ENCODE measurements at regions of chr6 and their contacts with region 1.

Region 1: DNA sequence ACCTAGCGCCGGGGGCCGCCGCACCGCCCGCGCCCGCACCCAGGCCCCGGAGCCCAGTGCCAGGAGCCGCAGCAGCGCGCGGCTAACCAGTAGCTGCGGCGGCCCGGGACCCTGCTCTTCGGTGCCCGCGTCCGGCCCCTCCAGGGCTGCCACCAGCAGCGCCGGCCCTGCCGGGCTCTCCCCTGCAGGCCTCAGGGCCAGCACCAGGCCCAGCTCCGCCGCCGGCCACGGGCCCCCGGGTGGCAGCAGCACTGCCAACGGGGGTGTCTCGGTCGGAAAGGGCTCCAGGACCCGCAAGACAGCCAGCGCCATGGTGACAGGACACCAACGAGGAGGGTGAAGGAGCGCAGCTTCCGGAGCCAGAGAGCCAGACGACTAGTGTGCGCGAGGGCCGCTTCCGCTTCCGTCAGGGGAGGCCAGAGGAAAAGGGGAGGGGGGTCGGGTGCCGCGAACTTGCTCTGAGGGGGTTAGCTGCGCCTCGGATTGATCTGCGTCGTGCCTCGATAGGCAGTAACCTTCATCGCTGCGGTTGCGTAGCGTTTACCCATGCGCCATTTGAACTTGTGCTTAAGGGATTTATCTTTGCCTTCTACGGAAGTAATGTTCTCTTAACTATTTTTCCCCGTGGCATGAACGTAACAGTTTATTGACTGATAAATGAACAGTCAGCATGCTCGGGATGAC is at the start of gene PEX6:
- DNase-seq: peak; percentile 98
- ATAC-seq: peak; percentile 95
- H3K4me3 Mint-ChIP-seq: peak within 1 kb of the TSS; percentile 89
- H3K27ac Mint-ChIP-seq: peak within 1 kb of the TSS; percentile 95
- H3K4me1 Mint-ChIP-seq: peaks cover 45% of the 10 kb centered on the region
- H3K27me3 Mint-ChIP-seq: no peaks in the 10 kb centered on the region
- total RNA-seq, gene PEX6: 10.7 to 14.6 TPM

Region 2: GRCh38 chr6:42777126-42777822 is 201.7 kb before region 1 on chr6:
- CTCF ChIA-PET with region 1: no interaction called
- POLR2A ChIA-PET with region 1: no interaction called
- intact Hi-C with region 1: loop called (anchors 1 to 10 kb)
- DNase-seq: no peak
- ATAC-seq: no peak
- H3K4me3 Mint-ChIP-seq: no peak overlapping the region
- H3K27ac Mint-ChIP-seq: peak overlapping the region; percentile 79
- H3K4me1 Mint-ChIP-seq: peaks cover 67% of the 10 kb centered on the region
- H3K27me3 Mint-ChIP-seq: no peaks in the 10 kb centered on the region

Region 3: GRCh38 chr6:43021270-43022047 is 42.5 kb after region 1 on chr6 and contains the start of gene RRP36:
- CTCF ChIA-PET with region 1: interaction called, 4 read pairs
- POLR2A ChIA-PET with region 1: no interaction called
- intact Hi-C with region 1: loop called in 1 of 2 experiments (anchors 1 kb)
- DNase-seq: peak; percentile 83
- ATAC-seq: peak; percentile 84
- H3K4me3 Mint-ChIP-seq: peak within 1 kb of the TSS; percentile 93
- H3K27ac Mint-ChIP-seq: peak within 1 kb of the TSS; percentile 88
- H3K4me1 Mint-ChIP-seq: peaks cover 32% of the 10 kb centered on the region
- H3K27me3 Mint-ChIP-seq: no peaks in the 10 kb centered on the region
- total RNA-seq, gene RRP36: 45.8 to 48.1 TPM

Region 4: DNA sequence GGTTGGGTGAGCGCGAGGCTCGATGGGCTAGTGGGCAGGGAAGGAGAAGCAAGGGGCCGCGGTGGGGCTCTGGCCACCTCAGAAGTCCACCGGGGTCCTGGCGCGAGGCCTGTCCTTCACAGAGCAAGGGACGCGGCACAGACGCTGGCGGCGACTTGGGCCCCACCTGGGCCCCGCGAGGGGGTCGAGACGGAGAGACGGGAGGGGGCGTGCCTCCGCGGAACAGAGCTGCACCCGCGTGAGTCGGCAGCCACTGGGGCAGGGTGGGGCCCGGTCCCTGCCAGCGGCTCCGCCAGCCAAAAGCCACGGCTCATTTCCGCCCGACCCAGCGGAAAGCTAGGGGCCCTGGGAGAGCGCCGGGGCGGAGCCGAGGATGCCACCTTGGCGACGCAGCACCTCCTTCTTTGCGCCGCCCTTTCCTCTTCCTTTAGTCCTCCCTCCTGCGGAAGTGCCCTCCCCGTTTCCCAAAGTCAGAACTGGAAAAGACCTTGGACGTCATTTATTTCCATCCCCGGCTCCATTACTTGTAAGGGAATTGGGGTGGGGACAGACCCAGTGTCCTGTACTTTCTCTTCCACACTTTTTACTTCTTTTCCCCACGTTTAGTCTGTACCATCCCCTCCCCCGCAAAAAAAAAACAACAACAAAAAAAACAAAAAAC is 74.7 kb after region 1 on chr6 and contains the start of gene CUL7:
- CTCF ChIA-PET with region 1: interaction called, 3 read pairs
- POLR2A ChIA-PET with region 1: interaction called, 4 read pairs
- intact Hi-C with region 1: loop called (anchors 1 kb)
- DNase-seq: peak; percentile 96
- ATAC-seq: peak; percentile 99
- H3K4me3 Mint-ChIP-seq: peak within 1 kb of the TSS; percentile 99
- H3K27ac Mint-ChIP-seq: peak within 1 kb of the TSS; percentile 97
- H3K4me1 Mint-ChIP-seq: peaks cover 43% of the 10 kb centered on the region
- H3K27me3 Mint-ChIP-seq: no peaks in the 10 kb centered on the region
- total RNA-seq, gene CUL7: 16.3 to 18.0 TPM